ENCODE measurements at regions of chr15 and their contacts with region 1.

Region 1: GRCh38 chr15:63891079-63891767 is 57.5 kb upstream of the HERC1 start:
- DNase-seq: peak; percentile 70 to 79 (median 74)
- H3K4me3 ChIP-seq: peak overlapping the region in 1 of 7 experiments; percentile 19
- H3K27ac ChIP-seq: no peak overlapping the region
- H3K4me1 ChIP-seq: peaks cover 26 to 65% (median 61%) of the 10 kb centered on the region in 4 experiments
- H3K27me3 ChIP-seq: no peaks in the 10 kb centered on the region

Region 2: GRCh38 chr15:63553388-63553791 is 337.8 kb before region 1 on chr15:
- CTCF ChIA-PET with region 1: no interaction called
- POLR2A ChIA-PET with region 1: no interaction called
- DNase-seq: peak; percentile 10 to 72 (median 57)
- H3K4me3 ChIP-seq: no peak overlapping the region
- H3K27ac ChIP-seq: no peak overlapping the region
- H3K4me1 ChIP-seq: peaks cover 0 to 14% (median 2%) of the 10 kb centered on the region in 4 experiments
- H3K27me3 ChIP-seq: peaks cover 0 to 2% (median 0%) of the 10 kb centered on the region in 5 experiments

Region 3: GRCh38 chr15:63826528-63826927 is 64.7 kb before region 1 on chr15:
- CTCF ChIA-PET with region 1: interaction called, 24 read pairs
- POLR2A ChIA-PET with region 1: no interaction called
- DNase-seq: peak; percentile 72 to 82 (median 82)
- H3K4me3 ChIP-seq: no peak overlapping the region
- H3K27ac ChIP-seq: no peak overlapping the region
- H3K4me1 ChIP-seq: peaks cover 4 to 30% (median 13%) of the 10 kb centered on the region in 4 experiments
- H3K27me3 ChIP-seq: no peaks in the 10 kb centered on the region

Region 4: DNA sequence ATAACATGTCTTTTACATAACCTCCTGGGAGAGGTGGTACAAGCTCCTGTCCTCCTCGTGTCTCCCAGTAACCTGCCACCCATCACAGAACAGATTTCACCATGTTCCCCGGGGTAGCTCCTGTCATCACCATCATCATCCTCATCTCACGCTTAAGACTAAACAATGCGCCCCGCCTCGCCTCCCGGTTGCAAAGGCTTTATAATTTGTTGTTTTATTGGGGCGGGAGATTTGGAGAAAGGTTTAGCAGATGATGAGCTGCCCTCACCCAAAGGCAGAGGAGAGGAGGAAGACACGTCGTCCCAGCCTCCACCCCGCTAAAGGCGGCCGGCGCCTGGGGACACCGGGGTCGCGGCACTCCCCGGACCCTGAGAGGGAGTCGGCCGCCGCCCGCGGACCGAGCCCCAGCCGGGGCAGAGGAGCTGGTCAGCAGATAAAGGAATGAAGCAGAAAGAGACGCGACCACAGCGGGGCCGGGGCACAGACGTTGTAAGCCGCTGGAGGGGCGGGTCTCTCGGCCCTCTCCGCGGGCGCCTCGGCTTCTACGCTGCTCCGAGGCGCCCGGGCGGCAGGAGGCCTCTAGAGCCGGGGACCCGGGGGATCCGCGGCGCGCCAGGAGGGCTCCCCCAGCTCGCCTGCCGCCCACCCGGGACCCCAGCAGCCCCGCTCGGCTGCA is 58.1 kb before region 1 on chr15:
- CTCF ChIA-PET with region 1: interaction called, 24 read pairs
- POLR2A ChIA-PET with region 1: interaction called, 4 read pairs
- DNase-seq: peak in 1 of 3 donors; percentile 30
- H3K4me3 ChIP-seq: peak overlapping the region; percentile 91 to 97 (median 95)
- H3K27ac ChIP-seq: peak overlapping the region; percentile 91 to 97
- H3K4me1 ChIP-seq: peaks cover 18 to 55% (median 37%) of the 10 kb centered on the region in 4 experiments
- H3K27me3 ChIP-seq: no peaks in the 10 kb centered on the region

Region 5: DNA sequence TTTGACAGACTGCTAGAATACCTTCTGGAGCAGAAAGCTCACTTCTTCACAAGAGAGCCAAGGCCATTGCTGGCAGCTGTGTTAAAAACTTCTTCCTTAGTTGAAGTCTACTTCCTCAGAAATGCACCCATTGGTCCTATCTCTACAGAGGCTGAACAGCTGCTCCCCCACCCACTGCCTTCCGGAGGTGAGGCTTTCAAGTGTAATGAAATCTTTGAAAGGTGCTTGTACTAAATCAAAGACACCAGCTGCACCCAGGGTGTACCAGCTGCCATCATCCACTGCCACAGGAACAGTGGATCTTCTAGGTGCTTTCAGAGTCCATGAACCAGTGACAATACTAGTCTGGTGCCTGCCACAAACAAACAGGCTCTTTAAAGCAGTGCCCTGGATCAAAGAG is 31.1 kb before region 1 on chr15:
- CTCF ChIA-PET with region 1: no interaction called
- POLR2A ChIA-PET with region 1: no interaction called
- DNase-seq: peak in 2 of 3 donors; percentile 35 to 57
- H3K4me3 ChIP-seq: no peak overlapping the region
- H3K27ac ChIP-seq: no peak overlapping the region
- H3K4me1 ChIP-seq: peaks cover 2 to 19% (median 16%) of the 10 kb centered on the region in 4 experiments
- H3K27me3 ChIP-seq: no peaks in the 10 kb centered on the region

Region 6: GRCh38 chr15:63905558-63906265 is 14.5 kb after region 1 on chr15:
- CTCF ChIA-PET with region 1: interaction called, 15 read pairs
- POLR2A ChIA-PET with region 1: no interaction called
- DNase-seq: peak in 2 of 3 donors; percentile 66 to 77
- H3K4me3 ChIP-seq: peak overlapping the region in 2 of 7 experiments; percentile 7 to 33
- H3K27ac ChIP-seq: peak overlapping the region in 1 of 2 experiments; percentile 59
- H3K4me1 ChIP-seq: peaks cover 0 to 40% (median 21%) of the 10 kb centered on the region in 4 experiments
- H3K27me3 ChIP-seq: no peaks in the 10 kb centered on the region

Region 7: GRCh38 chr15:63973212-63974009 is 82.2 kb after region 1 on chr15:
- CTCF ChIA-PET with region 1: no interaction called
- POLR2A ChIA-PET with region 1: no interaction called
- DNase-seq: no peak
- H3K4me3 ChIP-seq: no peak overlapping the region
- H3K27ac ChIP-seq: no peak overlapping the region
- H3K4me1 ChIP-seq: peaks cover 3 to 22% (median 18%) of the 10 kb centered on the region in 4 experiments
- H3K27me3 ChIP-seq: no peaks in the 10 kb centered on the region

Region 8: GRCh38 chr15:64024172-64025050 is 133.2 kb after region 1 on chr15:
- CTCF ChIA-PET with region 1: no interaction called
- POLR2A ChIA-PET with region 1: no interaction called
- DNase-seq: no peak
- H3K4me3 ChIP-seq: no peak overlapping the region
- H3K27ac ChIP-seq: no peak overlapping the region
- H3K4me1 ChIP-seq: peaks cover 0 to 10% (median 1%) of the 10 kb centered on the region in 4 experiments
- H3K27me3 ChIP-seq: no peaks in the 10 kb centered on the region